Panc1 (cell line): ENCODE measurements at regions of chr18 and their contacts with region 1.

Region 1: GRCh38 chr18:59267503-59268126 is 5.6 kb downstream of the RAX start:
- DNase-seq: no peak
- ATAC-seq: peak; percentile 64
- H3K4me3 ChIP-seq: no peak overlapping the region
- H3K27ac ChIP-seq: no peak overlapping the region
- H3K4me1 ChIP-seq: no peaks in the 10 kb centered on the region
- H3K27me3 ChIP-seq: peaks cover 19% of the 10 kb centered on the region
- CTCF ChIP-seq: no peak; the same call in 1 of the 2 replicates

Region 2: GRCh38 chr18:59005262-59005661 is 262.4 kb before region 1 on chr18:
- CTCF ChIA-PET with region 1: no interaction called
- POLR2A ChIA-PET with region 1: no interaction called
- in situ Hi-C with region 1: no loop called
- intact Hi-C with region 1: no loop called
- DNase-seq: no peak
- ATAC-seq: peak; percentile 80
- H3K4me3 ChIP-seq: no peak overlapping the region
- H3K27ac ChIP-seq: peak overlapping the region; percentile 75
- H3K4me1 ChIP-seq: no peaks in the 10 kb centered on the region
- H3K27me3 ChIP-seq: no peaks in the 10 kb centered on the region
- CTCF ChIP-seq: no peak

Region 3: DNA sequence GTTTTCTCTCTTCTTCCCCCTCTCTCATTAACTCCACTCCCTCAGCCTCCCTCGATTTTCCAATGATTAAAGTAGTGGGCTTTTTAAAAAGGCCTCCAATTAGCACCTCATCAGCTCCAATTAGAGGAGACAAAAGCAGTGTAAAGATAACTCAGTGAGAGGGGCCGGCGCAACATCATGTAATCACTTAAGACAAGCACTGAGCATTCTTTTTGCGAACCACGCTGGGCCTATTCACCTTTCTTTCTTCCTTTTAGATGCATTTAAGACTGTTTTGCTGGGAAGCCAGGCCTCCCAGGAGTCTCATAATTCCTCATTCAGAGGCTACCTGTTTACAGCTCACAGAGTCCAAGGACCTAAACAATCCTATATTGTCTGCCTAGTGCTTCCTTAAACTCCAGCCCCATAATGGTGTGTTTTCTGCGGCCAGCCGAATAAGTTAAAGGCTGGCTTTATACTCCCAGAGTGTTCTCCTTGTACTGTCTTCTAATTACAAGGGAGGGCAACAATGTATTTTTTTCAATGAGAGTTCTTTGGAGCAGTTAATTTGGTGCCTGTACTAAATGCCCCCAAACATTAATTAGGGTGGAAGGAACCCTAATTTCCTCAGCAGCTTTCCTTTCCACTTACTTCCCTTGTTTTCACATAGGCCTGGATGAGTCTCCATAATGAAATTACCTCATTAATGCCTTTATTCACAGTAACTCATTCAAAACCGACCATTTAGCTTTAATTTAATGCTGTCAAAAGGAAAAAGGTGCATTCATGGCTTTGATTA is 119.5 kb after region 1 on chr18:
- CTCF ChIA-PET with region 1: interaction called, 17 read pairs
- POLR2A ChIA-PET with region 1: no interaction called
- in situ Hi-C with region 1: no loop called
- intact Hi-C with region 1: no loop called
- DNase-seq: no peak
- ATAC-seq: no peak
- H3K4me3 ChIP-seq: no peak overlapping the region
- H3K27ac ChIP-seq: no peak overlapping the region
- H3K4me1 ChIP-seq: no peaks in the 10 kb centered on the region
- H3K27me3 ChIP-seq: no peaks in the 10 kb centered on the region
- CTCF ChIP-seq: no peak